Calu3 (cell line): ENCODE measurements at regions of chr12 and their contacts with region 1.

Region 1: GRCh38 chr12:119036878-119037825 is 55.8 kb downstream of the SRRM4 start:
- DNase-seq: peak; percentile 37
- H3K4me3 Mint-ChIP-seq: no peak overlapping the region
- H3K27ac Mint-ChIP-seq: no peak overlapping the region
- H3K4me1 Mint-ChIP-seq: no peaks in the 10 kb centered on the region
- H3K27me3 Mint-ChIP-seq: no peaks in the 10 kb centered on the region
- CTCF ChIP-seq: peak; percentile 31

Region 2: GRCh38 chr12:118979763-118980406 is 57.3 kb before region 1 on chr12:
- CTCF ChIA-PET with region 1: no interaction called
- intact Hi-C with region 1: loop called (anchors 2 kb)
- DNase-seq: peak; percentile 60
- H3K4me3 Mint-ChIP-seq: no peak overlapping the region
- H3K27ac Mint-ChIP-seq: no peak overlapping the region
- H3K4me1 Mint-ChIP-seq: no peaks in the 10 kb centered on the region
- H3K27me3 Mint-ChIP-seq: peaks cover 41% of the 10 kb centered on the region
- CTCF ChIP-seq: peak; percentile 46

Region 3: GRCh38 chr12:119136811-119137410 is 99.8 kb after region 1 on chr12:
- CTCF ChIA-PET with region 1: no interaction called
- intact Hi-C with region 1: no loop called
- DNase-seq: no peak
- H3K4me3 Mint-ChIP-seq: no peak overlapping the region
- H3K27ac Mint-ChIP-seq: no peak overlapping the region
- H3K4me1 Mint-ChIP-seq: no peaks in the 10 kb centered on the region
- H3K27me3 Mint-ChIP-seq: peaks cover 63% of the 10 kb centered on the region
- CTCF ChIP-seq: no peak

Region 4: DNA sequence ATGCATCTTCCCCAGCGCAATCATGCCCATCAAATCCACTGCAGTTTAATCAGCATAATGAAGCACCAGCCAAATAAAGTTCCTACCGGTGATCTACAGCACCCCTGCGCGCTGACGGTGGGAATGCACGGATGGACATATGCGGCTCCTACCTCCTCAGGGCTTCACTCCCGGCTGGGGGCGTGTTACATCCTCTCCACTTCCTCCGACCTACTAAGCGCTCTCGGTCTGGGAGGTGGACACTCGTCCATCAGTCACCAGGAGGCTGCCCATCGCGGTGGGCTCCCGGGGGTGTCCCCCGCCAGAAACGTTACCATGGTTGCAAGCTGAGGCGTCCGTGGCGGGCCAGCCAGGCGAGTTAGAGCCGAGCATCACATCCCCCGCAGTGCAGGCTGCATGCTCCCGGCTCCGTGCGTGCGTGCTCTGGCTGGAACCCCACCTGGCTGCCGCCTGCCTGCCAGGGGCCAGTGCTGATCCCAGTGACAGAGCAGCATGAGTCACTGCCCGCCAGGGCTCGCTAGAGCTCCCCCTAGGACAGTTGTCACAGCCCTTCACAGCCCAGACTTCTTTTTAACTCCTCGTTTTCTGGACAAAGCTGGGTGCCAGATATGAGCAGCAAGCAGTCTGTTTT is 767.0 kb after region 1 on chr12:
- CTCF ChIA-PET with region 1: no interaction called
- intact Hi-C with region 1: no loop called
- DNase-seq: peak; percentile 76
- H3K4me3 Mint-ChIP-seq: no peak overlapping the region
- H3K27ac Mint-ChIP-seq: no peak overlapping the region
- H3K4me1 Mint-ChIP-seq: peaks cover 29% of the 10 kb centered on the region
- H3K27me3 Mint-ChIP-seq: no peaks in the 10 kb centered on the region
- CTCF ChIP-seq: peak; percentile 49